MCF 10A (cell line): ENCODE measurements at regions of chr4 and their contacts with region 1.

Region 1: GRCh38 chr4:47122592-47123291 is 91.4 kb downstream of the GABRB1 start:
- DNase-seq: peak; percentile 86
- H3K4me3 Mint-ChIP-seq: no peak overlapping the region
- H3K27ac Mint-ChIP-seq: no peak overlapping the region
- H3K4me1 Mint-ChIP-seq: no peaks in the 10 kb centered on the region
- H3K27me3 Mint-ChIP-seq: peaks cover 60% of the 10 kb centered on the region
- CTCF ChIP-seq: peak; percentile 85

Region 2: DNA sequence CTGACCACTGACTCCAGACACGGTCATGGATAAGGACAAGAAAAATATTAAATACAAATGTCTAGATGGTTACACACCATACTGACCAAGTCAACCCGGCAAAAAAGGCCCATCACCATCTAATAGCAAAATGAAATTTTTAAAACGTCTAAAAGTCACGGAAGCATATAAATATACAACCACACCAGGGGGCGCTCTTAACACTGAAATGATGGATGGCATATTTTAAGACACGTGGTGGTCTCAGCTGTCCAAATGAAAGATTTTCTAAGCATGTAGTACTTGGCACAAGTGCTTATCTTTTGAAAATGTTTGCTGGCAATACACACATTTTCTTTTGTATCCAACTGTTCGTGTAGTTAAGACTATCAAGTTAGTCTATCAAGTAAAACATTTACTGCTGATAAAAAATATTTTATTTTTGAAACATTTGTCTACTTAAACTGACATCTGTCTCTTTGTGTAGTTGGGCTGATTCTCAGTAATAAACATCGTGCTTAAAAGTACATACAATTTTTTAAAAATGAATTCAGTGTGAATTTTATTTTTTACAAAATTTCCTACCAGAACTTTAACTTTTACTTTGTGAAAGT is 278.3 kb before region 1 on chr4:
- CTCF ChIA-PET with region 1: interaction called, 26 read pairs
- POLR2A ChIA-PET with region 1: no interaction called
- intact Hi-C with region 1: loop called (anchors 1 kb)
- DNase-seq: peak; percentile 70
- H3K4me3 Mint-ChIP-seq: no peak overlapping the region
- H3K27ac Mint-ChIP-seq: no peak overlapping the region
- H3K4me1 Mint-ChIP-seq: no peaks in the 10 kb centered on the region
- H3K27me3 Mint-ChIP-seq: no peaks in the 10 kb centered on the region
- CTCF ChIP-seq: peak; percentile 52

Region 3: GRCh38 chr4:46980851-46981250 is 141.9 kb before region 1 on chr4:
- CTCF ChIA-PET with region 1: interaction called, 10 read pairs
- POLR2A ChIA-PET with region 1: no interaction called
- intact Hi-C with region 1: no loop called
- DNase-seq: no peak
- H3K4me3 Mint-ChIP-seq: no peak overlapping the region
- H3K27ac Mint-ChIP-seq: no peak overlapping the region
- H3K4me1 Mint-ChIP-seq: no peaks in the 10 kb centered on the region
- H3K27me3 Mint-ChIP-seq: peaks cover 74% of the 10 kb centered on the region
- CTCF ChIP-seq: no peak

Region 4: DNA sequence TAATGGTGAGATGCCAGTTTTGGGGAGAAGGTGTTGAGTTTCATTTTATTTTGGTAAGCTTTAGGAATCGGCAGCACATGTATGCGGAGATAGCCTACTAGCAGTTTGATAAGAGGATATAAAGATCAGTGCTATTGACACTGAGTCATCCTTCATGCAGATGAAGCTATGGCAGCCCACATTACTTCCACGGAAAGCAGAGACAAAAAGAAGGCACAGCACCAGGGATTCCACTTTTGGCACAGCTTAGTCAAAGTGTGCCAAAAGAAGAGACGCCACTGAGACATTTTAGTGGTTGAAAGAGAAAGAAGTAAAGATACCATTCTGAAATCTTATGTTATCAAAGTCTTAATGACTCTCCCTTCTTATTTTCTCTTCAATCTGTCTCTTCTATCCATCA is 12.5 kb after region 1 on chr4:
- CTCF ChIA-PET with region 1: interaction called, 14 read pairs
- POLR2A ChIA-PET with region 1: no interaction called
- intact Hi-C with region 1: no loop called
- DNase-seq: no peak
- H3K4me3 Mint-ChIP-seq: no peak overlapping the region
- H3K27ac Mint-ChIP-seq: no peak overlapping the region
- H3K4me1 Mint-ChIP-seq: no peaks in the 10 kb centered on the region
- H3K27me3 Mint-ChIP-seq: peaks cover 49% of the 10 kb centered on the region
- CTCF ChIP-seq: no peak

Region 5: GRCh38 chr4:47239649-47240048 is 116.9 kb after region 1 on chr4:
- CTCF ChIA-PET with region 1: no interaction called
- POLR2A ChIA-PET with region 1: no interaction called
- intact Hi-C with region 1: no loop called
- DNase-seq: no peak
- H3K4me3 Mint-ChIP-seq: no peak overlapping the region
- H3K27ac Mint-ChIP-seq: no peak overlapping the region
- H3K4me1 Mint-ChIP-seq: no peaks in the 10 kb centered on the region
- H3K27me3 Mint-ChIP-seq: peaks cover 91% of the 10 kb centered on the region
- CTCF ChIP-seq: no peak

Region 6: GRCh38 chr4:47383829-47384427 is 261.2 kb after region 1 on chr4:
- CTCF ChIA-PET with region 1: interaction called, 20 read pairs
- POLR2A ChIA-PET with region 1: no interaction called
- intact Hi-C with region 1: loop called (anchors 2 kb)
- DNase-seq: peak; percentile 45
- H3K4me3 Mint-ChIP-seq: no peak overlapping the region
- H3K27ac Mint-ChIP-seq: no peak overlapping the region
- H3K4me1 Mint-ChIP-seq: no peaks in the 10 kb centered on the region
- H3K27me3 Mint-ChIP-seq: peaks cover 39% of the 10 kb centered on the region
- CTCF ChIP-seq: peak; percentile 48